Activated CD4-positive, alpha-beta memory T cell treated with anti-CD3 and anti-CD28 coated beads, Interleukin-2, amount 10 ng/mL, durations not matched to agents 7 days and 5 days (primary cell): ENCODE measurements at regions of chr9 and their contacts with region 1.

Region 1: GRCh38 chr9:131668439-131669268 is 71.2 kb downstream of the RAPGEF1 start:
- DNase-seq: peak; percentile 76
- H3K4me3 Mint-ChIP-seq: peak overlapping the region; percentile 67
- H3K27ac Mint-ChIP-seq: peak overlapping the region; percentile 100
- H3K4me1 Mint-ChIP-seq: peaks cover 94% of the 10 kb centered on the region
- H3K27me3 Mint-ChIP-seq: no peaks in the 10 kb centered on the region

Region 2: GRCh38 chr9:131393622-131394463 is 274.8 kb before region 1 on chr9 and contains the start of gene PRRC2B:
- CTCF ChIA-PET with region 1: no interaction called
- POLR2A ChIA-PET with region 1: no interaction called
- DNase-seq: peak; percentile 87
- H3K4me3 Mint-ChIP-seq: peak within 1 kb of the TSS; percentile 81
- H3K27ac Mint-ChIP-seq: peak within 1 kb of the TSS; percentile 92
- H3K4me1 Mint-ChIP-seq: peaks cover 48% of the 10 kb centered on the region
- H3K27me3 Mint-ChIP-seq: peaks cover 7% of the 10 kb centered on the region
- total RNA-seq, gene PRRC2B: 178 to 190 TPM

Region 3: GRCh38 chr9:131641618-131642495 is 26.8 kb before region 1 on chr9:
- CTCF ChIA-PET with region 1: interaction called, 6 read pairs
- POLR2A ChIA-PET with region 1: interaction called, 10 read pairs
- DNase-seq: no peak
- H3K4me3 Mint-ChIP-seq: no peak overlapping the region
- H3K27ac Mint-ChIP-seq: peak overlapping the region; percentile 85
- H3K4me1 Mint-ChIP-seq: peaks cover 60% of the 10 kb centered on the region
- H3K27me3 Mint-ChIP-seq: no peaks in the 10 kb centered on the region

Region 4: GRCh38 chr9:131656356-131657036 is 12.2 kb before region 1 on chr9:
- CTCF ChIA-PET with region 1: interaction called, 3 read pairs
- POLR2A ChIA-PET with region 1: interaction called, 61 read pairs
- DNase-seq: peak; percentile 81
- H3K4me3 Mint-ChIP-seq: peak overlapping the region; percentile 25
- H3K27ac Mint-ChIP-seq: peak overlapping the region; percentile 90
- H3K4me1 Mint-ChIP-seq: peaks cover 86% of the 10 kb centered on the region
- H3K27me3 Mint-ChIP-seq: no peaks in the 10 kb centered on the region

Region 5: GRCh38 chr9:131709771-131710454 is 41.3 kb after region 1 on chr9:
- CTCF ChIA-PET with region 1: interaction called, 7 read pairs
- POLR2A ChIA-PET with region 1: interaction called, 22 read pairs
- DNase-seq: peak; percentile 44
- H3K4me3 Mint-ChIP-seq: peak overlapping the region; percentile 39
- H3K27ac Mint-ChIP-seq: peak overlapping the region; percentile 88
- H3K4me1 Mint-ChIP-seq: peaks cover 79% of the 10 kb centered on the region
- H3K27me3 Mint-ChIP-seq: no peaks in the 10 kb centered on the region

Region 6: GRCh38 chr9:131739980-131740648 is 71.5 kb after region 1 on chr9 and contains the start of gene RAPGEF1:
- CTCF ChIA-PET with region 1: interaction called, 78 read pairs
- POLR2A ChIA-PET with region 1: interaction called, 238 read pairs
- DNase-seq: peak; percentile 85
- H3K4me3 Mint-ChIP-seq: peak within 1 kb of the TSS; percentile 97
- H3K27ac Mint-ChIP-seq: peak within 1 kb of the TSS; percentile 92
- H3K4me1 Mint-ChIP-seq: peaks cover 59% of the 10 kb centered on the region
- H3K27me3 Mint-ChIP-seq: no peaks in the 10 kb centered on the region
- total RNA-seq, gene RAPGEF1: 149 to 158 TPM